Natural killer cell (primary cell): ENCODE measurements at regions of chr16 and their contacts with region 1.

Region 1: GRCh38 chr16:85253084-85253941 is 141.0 kb upstream of the CIBAR2 start:
- DNase-seq: peak; percentile 73 to 80
- ATAC-seq: peak; percentile 75 to 97 (median 97)
- H3K4me3 ChIP-seq: no peak overlapping the region
- H3K4me3 Mint-ChIP-seq: no peak overlapping the region
- H3K27ac ChIP-seq: no peak overlapping the region
- H3K27ac Mint-ChIP-seq: no peak overlapping the region
- H3K4me1 ChIP-seq: no peaks in the 10 kb centered on the region
- H3K4me1 Mint-ChIP-seq: no peaks in the 10 kb centered on the region
- H3K27me3 ChIP-seq: no peaks in the 10 kb centered on the region
- H3K27me3 Mint-ChIP-seq: peaks cover 0 to 9% of the 10 kb centered on the region in 2 donors
- CTCF ChIP-seq: peak; percentile 94

Region 2: DNA sequence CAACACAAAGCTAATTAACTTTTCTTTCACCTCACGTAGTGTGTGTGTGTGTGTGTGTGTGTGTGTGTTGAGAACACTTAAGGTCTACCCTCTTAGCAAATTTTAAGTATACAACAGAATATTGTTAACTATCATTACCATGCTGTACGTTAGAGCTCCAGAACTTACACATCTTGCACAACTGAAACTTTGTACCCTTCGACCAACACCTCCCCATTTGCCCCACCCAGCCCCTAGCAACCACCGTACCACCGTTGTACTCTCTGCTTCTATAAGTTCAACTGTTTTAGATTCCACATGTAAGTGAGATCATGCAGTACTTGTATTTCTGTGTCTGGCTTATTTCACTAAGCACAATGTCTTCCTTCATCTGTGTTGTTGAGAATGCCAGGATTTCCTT is 1382.5 kb before region 1 on chr16:
- intact Hi-C with region 1: no loop called
- DNase-seq: no peak
- ATAC-seq: no peak
- H3K4me3 ChIP-seq: no peak overlapping the region
- H3K4me3 Mint-ChIP-seq: no peak overlapping the region
- H3K27ac ChIP-seq: no peak overlapping the region
- H3K27ac Mint-ChIP-seq: no peak overlapping the region
- H3K4me1 ChIP-seq: no peaks in the 10 kb centered on the region
- H3K4me1 Mint-ChIP-seq: no peaks in the 10 kb centered on the region
- H3K27me3 ChIP-seq: no peaks in the 10 kb centered on the region
- H3K27me3 Mint-ChIP-seq: peaks cover 30 to 60% of the 10 kb centered on the region in 2 donors
- CTCF ChIP-seq: no peak

Region 3: DNA sequence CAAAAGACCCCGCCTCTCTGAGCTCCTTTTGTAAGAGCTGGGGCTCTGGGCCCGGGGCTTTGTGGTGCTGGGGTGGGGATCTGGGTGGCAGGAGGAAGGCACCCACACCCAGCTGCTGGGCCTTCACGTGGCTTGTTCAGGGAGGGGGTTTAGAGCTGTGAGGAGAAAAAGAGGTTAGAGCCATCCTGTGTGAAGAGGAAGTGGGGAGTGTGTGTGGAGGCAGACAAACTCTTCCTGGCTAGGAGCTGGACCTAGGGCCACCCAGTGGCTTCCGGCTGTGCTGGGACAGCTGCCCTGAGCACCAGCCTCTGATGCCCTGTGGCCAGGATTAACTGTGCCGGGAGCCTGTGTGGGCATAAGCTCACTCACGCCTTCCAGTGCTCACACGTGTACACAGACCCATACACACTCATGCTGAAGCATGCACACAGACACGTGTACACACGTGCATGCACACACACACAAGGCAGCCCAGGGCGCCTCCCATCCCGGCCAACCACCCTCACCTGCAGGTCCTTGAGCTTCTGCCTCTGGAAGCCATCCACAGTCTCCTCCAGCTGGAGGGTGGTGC is 148.4 kb before region 1 on chr16:
- intact Hi-C with region 1: loop called (anchors 10 kb)
- DNase-seq: peak; percentile 58 to 69
- ATAC-seq: peak; percentile 80 to 93 (median 93)
- H3K4me3 ChIP-seq: no peak overlapping the region
- H3K4me3 Mint-ChIP-seq: peak overlapping the region; percentile 81
- H3K27ac ChIP-seq: peak overlapping the region; percentile 48
- H3K27ac Mint-ChIP-seq: peak overlapping the region; percentile 89 to 93
- H3K4me1 ChIP-seq: peaks cover 76% of the 10 kb centered on the region
- H3K4me1 Mint-ChIP-seq: peaks cover 68 to 81% of the 10 kb centered on the region in 2 donors
- H3K27me3 ChIP-seq: no peaks in the 10 kb centered on the region
- H3K27me3 Mint-ChIP-seq: no peaks in the 10 kb centered on the region
- CTCF ChIP-seq: no peak